ENCODE measurements at regions of chr6 and their contacts with region 1.

Region 1: GRCh38 chr6:49849213-49849907 is 17.0 kb downstream of the CRISP1 start:
- DNase-seq: no peak
- H3K4me3 ChIP-seq: no peak overlapping the region
- H3K27ac ChIP-seq: no peak overlapping the region
- H3K27me3 ChIP-seq: peaks cover 0 to 19% (median 0%) of the 10 kb centered on the region in 45 donors
- CTCF ChIP-seq: peak; percentile 54 to 91 (median 78)

Region 2: GRCh38 chr6:49625140-49625539 is 224.2 kb before region 1 on chr6:
- intact Hi-C with region 1: loop called (anchors 5 kb)
- DNase-seq: no peak
- H3K4me3 ChIP-seq: no peak overlapping the region
- H3K27ac ChIP-seq: no peak overlapping the region
- H3K27me3 ChIP-seq: peaks cover 0 to 4% (median 0%) of the 10 kb centered on the region in 45 donors
- CTCF ChIP-seq: no peak